Transverse colon (tissue), 4 donors: ENCODE measurements at regions of chr10 and their contacts with region 1.

Region 1: GRCh38 chr10:70540089-70540788 is 61.7 kb downstream of the PALD1 start:
- DNase-seq: no peak
- H3K4me3 ChIP-seq: no peak overlapping the region
- H3K27ac ChIP-seq: no peak overlapping the region
- H3K4me1 ChIP-seq: no peaks in the 10 kb centered on the region
- H3K27me3 ChIP-seq: no peaks in the 10 kb centered on the region
- CTCF ChIP-seq: peak; percentile 55 to 70 (median 62)
- EP300 ChIP-seq: no peak
- POLR2A ChIP-seq: no peak

Region 2: DNA sequence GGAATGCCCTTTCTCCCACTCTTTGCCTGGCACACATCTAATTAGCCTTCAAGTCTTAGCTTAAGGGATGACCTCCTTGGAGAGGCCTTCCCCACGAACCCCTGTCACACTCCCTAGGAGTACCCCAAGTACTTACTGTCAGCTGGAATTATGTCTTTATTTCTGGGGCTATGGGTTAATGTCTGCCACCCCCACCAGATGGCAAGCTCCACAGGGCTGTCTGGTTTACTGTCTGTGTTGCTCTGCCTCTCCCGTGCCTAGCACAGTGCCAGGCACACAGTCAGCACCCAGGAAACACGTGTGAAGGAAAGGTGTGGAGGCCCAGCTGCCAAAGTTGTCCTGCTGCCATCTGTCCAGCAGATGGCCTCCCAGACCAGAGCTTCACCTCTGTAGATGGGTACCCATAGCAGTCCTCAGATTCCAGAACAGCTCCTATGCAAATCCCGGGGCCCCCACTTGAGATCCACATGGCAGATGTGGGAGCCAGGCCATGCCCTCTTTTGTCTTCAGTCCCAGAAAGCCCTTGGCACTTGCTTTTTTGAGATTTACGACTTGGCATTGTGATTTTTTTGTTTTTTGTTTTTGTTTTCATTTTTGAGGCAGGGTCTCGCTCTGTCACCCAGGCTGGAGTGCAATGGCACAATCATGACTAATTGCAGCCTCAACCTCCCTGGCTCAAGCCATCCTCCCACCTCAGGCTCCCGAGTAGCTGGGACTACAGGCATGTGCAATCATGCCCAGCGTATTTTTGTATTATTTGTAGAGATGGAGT is 78.8 kb before region 1 on chr10:
- in situ Hi-C with region 1: loop called in 2 of 4 experiments (anchors 5 to 10 kb)
- intact Hi-C with region 1: loop called (anchors 5 kb)
- DNase-seq: peak; percentile 62
- H3K4me3 ChIP-seq: no peak overlapping the region
- H3K27ac ChIP-seq: peak overlapping the region in 2 of 4 donors; percentile 16 to 44
- H3K4me1 ChIP-seq: peaks cover 8 to 28% (median 19%) of the 10 kb centered on the region in 4 donors
- H3K27me3 ChIP-seq: peaks cover 31% of the 10 kb centered on the region
- CTCF ChIP-seq: peak; percentile 73 to 82 (median 80)
- EP300 ChIP-seq: no peak
- POLR2A ChIP-seq: no peak

Region 3: DNA sequence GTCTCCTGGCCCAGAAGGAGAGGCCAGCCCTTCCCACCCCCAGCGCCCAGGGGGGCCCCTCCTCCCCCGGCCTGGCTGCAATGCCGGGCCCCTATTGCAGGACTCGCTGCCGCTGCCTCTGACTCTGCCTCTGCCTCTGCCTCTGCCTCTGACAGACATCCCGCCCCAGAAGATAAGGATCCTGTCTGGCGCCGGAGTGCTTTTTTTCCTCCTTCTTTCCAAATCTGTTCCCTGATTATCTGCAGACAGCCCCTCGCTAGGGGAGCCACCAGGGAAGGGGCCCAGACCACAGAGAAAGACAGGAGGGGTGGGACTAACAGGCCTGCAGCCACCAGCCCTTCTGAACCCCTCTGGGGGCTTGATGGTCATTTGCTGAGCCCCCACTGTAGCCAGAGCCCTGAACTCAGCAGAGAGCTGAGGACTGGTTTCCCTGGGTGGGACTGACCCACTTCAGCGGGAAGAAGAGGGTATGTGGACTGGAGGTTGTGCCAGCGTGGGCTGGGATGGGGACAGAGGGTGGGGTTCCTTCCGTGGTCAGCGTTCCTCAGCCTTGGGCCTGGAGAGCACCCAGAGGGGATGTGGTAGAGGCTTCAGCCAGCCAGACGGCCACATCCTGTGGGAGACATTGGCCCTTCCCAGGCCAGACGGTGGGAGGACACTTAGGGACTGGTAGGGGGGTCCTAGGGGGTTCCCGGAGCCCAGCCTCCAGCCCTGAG is 694.9 kb after region 1 on chr10:
- in situ Hi-C with region 1: no loop called
- intact Hi-C with region 1: no loop called
- DNase-seq: no peak
- H3K4me3 ChIP-seq: no peak overlapping the region
- H3K27ac ChIP-seq: peak overlapping the region in 3 of 4 donors; percentile 47 to 65 (median 57)
- H3K4me1 ChIP-seq: peaks cover 5 to 43% (median 23%) of the 10 kb centered on the region in 4 donors
- H3K27me3 ChIP-seq: no peaks in the 10 kb centered on the region
- CTCF ChIP-seq: no peak
- EP300 ChIP-seq: no peak
- POLR2A ChIP-seq: no peak